Activated CD4-positive, alpha-beta memory T cell treated with anti-CD3 and anti-CD28 coated beads, Interleukin-2, amount 10 ng/mL, durations not matched to agents 7 days and 5 days (primary cell): ENCODE measurements at regions of chr16 and their contacts with region 1.

Region 1: GRCh38 chr16:70364399-70364798 is 17.7 kb downstream of the DDX19A start:
- DNase-seq: no peak
- H3K4me3 Mint-ChIP-seq: no peak overlapping the region
- H3K27ac Mint-ChIP-seq: peak overlapping the region; percentile 6
- H3K4me1 Mint-ChIP-seq: peaks cover 4% of the 10 kb centered on the region
- H3K27me3 Mint-ChIP-seq: no peaks in the 10 kb centered on the region

Region 2: DNA sequence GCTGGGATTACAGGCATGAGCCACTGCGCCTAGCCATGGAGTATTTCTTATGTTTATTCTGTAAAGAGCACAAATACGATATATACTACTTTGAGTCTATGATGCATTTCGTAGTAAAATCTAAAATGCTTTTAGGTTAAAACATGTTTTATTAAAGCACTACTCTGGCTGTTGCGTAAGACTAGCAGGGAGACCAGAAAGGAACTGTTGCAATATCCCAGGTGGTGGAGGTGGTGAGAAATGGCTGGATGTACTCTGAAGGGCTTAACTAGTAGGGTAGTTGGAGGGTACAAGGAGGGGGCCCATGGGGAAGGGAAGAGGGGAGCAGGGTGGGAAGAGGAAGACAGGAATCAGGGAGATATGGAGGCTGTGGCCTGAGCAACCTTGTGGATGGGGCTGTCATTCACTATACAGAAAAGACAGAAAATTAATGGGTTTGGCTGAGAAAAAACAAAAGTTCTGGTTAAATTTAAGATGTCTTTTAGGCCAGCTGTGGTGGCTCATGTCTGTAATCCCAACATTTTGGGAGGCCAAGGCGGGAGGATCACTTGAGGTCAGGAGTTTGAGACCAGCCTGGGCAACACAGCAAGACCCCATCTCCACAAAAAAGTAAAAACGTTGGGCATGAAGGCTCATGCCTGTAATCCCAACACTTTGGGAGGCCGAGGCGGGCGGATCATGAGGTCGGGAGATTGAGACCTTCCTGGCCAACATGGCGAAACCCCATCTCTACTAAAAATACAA is 38.7 kb after region 1 on chr16:
- CTCF ChIA-PET with region 1: no interaction called
- POLR2A ChIA-PET with region 1: no interaction called
- DNase-seq: no peak
- H3K4me3 Mint-ChIP-seq: no peak overlapping the region
- H3K27ac Mint-ChIP-seq: no peak overlapping the region
- H3K4me1 Mint-ChIP-seq: peaks cover 36% of the 10 kb centered on the region
- H3K27me3 Mint-ChIP-seq: peaks cover 1% of the 10 kb centered on the region

Region 3: DNA sequence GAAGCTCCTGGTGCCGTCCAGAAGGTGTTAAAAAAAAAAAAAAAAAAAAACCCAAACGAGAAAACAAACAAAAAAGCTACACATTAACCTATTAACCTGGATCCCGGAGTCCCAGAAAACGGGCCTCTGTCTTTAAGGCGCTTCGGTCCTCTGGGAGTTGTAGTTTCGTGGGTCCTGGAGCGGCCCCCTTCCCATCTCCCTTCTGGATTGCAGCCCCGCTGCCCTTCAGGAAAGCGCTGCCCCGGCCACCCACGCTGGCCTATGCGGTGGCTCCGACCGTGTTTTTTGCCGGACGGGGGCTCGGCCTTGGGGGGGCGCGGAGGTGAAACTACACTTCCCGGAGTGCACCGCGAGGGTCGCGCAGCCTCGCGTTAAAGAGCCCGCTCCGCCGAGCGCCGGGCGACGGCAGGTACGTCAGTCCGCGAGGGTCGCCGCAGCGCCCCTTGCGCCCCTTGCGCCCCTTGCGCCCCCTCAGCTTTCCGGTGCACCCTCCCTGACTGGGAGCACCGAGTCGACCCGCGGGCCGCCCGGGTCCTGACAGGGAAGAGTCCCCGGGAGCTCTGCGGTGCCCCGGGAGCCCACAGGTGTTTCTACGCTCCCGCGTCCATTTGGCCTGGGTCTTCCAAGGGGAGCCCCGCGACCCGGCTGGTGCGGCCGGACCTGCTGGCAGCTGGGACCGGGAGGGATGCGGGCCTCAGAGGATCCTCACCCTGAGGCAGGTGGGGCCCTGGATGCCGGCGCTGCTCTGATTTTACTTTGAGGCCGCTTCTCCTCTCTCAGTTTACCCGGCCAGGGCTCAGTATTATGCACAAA is 90.0 kb after region 1 on chr16 and contains the start of gene FCSK:
- CTCF ChIA-PET with region 1: interaction called, 11 read pairs
- POLR2A ChIA-PET with region 1: no interaction called
- DNase-seq: peak; percentile 68
- H3K4me3 Mint-ChIP-seq: peak within 1 kb of the TSS; percentile 87
- H3K27ac Mint-ChIP-seq: peak within 1 kb of the TSS; percentile 79
- H3K4me1 Mint-ChIP-seq: peaks cover 18% of the 10 kb centered on the region
- H3K27me3 Mint-ChIP-seq: no peaks in the 10 kb centered on the region
- total RNA-seq, gene FCSK: 17.3 to 17.4 TPM

Region 4: GRCh38 chr16:70653809-70654771 is 289.7 kb after region 1 on chr16:
- CTCF ChIA-PET with region 1: interaction called, 11 read pairs
- POLR2A ChIA-PET with region 1: interaction called, 5 read pairs
- DNase-seq: peak; percentile 86
- H3K4me3 Mint-ChIP-seq: peak overlapping the region; percentile 31
- H3K27ac Mint-ChIP-seq: no peak overlapping the region
- H3K4me1 Mint-ChIP-seq: peaks cover 5% of the 10 kb centered on the region
- H3K27me3 Mint-ChIP-seq: peaks cover 3% of the 10 kb centered on the region